T-cell (primary cell): ENCODE measurements at regions of chr15 and their contacts with region 1.

Region 1: DNA sequence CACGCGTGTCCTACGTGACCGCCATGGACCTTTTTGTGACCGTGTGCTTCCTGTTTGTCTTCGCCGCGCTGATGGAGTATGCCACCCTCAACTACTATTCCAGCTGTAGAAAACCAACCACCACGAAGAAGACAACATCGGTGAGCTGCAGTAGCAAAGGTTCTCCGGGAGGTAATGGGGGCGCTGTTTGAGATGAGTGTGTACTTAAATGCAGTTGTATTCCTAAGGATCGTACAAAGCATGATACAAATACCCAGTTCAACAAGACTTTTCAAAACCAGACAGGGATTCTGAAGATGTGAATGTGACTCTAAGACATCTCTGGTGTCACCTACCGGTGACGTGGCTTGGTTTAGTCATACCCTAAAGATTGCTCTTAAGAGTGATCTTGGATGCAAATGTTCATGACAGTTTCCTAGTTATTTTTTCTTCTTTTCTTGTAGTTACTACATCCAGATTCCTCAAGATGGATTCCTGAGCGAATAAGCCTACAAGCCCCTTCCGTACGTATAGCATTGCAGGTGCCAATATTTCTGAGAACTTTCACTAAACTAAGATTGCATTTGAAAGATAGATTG is 556.6 kb downstream of the GABRG3 start:
- DNase-seq: no peak
- ATAC-seq: no peak
- H3K4me3 ChIP-seq: no peak overlapping the region
- H3K4me3 Mint-ChIP-seq: no peak overlapping the region
- H3K27ac ChIP-seq: no peak overlapping the region
- H3K27ac Mint-ChIP-seq: no peak overlapping the region
- H3K4me1 ChIP-seq: no peaks in the 10 kb centered on the region
- H3K4me1 Mint-ChIP-seq: no peaks in the 10 kb centered on the region
- H3K27me3 ChIP-seq: no peaks in the 10 kb centered on the region
- H3K27me3 Mint-ChIP-seq: no peaks in the 10 kb centered on the region

Region 2: DNA sequence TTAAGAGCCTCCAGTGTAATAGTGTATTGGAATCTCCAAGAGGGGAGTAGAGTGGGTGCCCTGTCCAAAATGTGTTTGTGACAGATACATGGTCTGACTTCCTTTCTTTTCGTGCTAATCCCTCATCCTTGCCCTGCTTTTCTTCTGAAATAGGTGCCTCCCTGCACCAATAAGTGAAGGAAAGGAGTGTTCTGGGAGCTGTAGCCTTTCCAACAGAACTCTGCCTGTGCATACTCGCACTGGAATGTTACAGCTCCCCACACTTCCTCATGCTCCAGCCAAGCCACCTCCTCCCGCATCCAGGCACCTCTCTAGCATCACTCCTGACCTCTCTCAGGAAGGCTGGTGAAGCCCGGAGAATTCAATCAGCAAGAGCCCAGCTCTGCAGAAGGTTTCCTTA is 78.6 kb before region 1 on chr15:
- CTCF ChIA-PET with region 1: interaction called in 1 of 2 experiments, 10 read pairs
- POLR2A ChIA-PET with region 1: no interaction called
- DNase-seq: no peak
- ATAC-seq: no peak
- H3K4me3 ChIP-seq: no peak overlapping the region
- H3K4me3 Mint-ChIP-seq: no peak overlapping the region
- H3K27ac ChIP-seq: no peak overlapping the region
- H3K27ac Mint-ChIP-seq: no peak overlapping the region
- H3K4me1 ChIP-seq: no peaks in the 10 kb centered on the region
- H3K4me1 Mint-ChIP-seq: no peaks in the 10 kb centered on the region
- H3K27me3 ChIP-seq: no peaks in the 10 kb centered on the region
- H3K27me3 Mint-ChIP-seq: no peaks in the 10 kb centered on the region